ENCODE measurements at regions of chr4 and their contacts with region 1.

Region 1: DNA sequence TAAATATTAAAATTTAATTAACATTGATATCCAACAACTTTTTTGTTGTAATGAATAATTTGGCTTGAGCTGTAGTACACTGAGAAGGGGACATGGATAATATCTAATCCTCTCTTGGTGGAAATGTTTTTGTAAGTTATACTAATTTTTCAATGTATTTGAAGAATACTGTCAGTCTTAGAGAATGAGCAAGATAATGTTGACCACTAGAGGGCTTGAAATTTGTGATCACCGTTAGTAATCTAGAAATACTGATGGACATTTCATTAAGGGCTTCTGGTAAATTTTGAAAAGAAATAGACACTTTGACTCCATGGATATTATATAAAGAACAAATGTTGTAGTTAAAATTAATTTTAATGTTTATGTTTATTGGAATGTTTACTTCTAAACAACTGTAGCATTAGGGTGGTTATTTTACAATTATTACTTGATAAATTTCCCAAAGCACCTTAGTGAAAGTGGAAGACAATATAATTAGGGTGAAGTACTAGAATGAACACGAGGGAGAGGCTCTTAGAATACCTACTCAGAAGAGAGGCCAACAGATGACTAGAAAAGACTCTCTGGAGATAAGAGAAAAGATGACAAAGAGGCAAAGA is 20.0 kb upstream of the CAMK2D start:
- DNase-seq: no peak
- ATAC-seq: no peak
- H3K4me3 Mint-ChIP-seq: no peak overlapping the region
- H3K27ac Mint-ChIP-seq: no peak overlapping the region
- H3K4me1 Mint-ChIP-seq: no peaks in the 10 kb centered on the region
- H3K27me3 Mint-ChIP-seq: no peaks in the 10 kb centered on the region
- CTCF ChIP-seq: peak; percentile 76

Region 2: GRCh38 chr4:113243312-113243711 is 538.2 kb before region 1 on chr4:
- CTCF ChIA-PET with region 1: no interaction called
- POLR2A ChIA-PET with region 1: no interaction called
- intact Hi-C with region 1: no loop called
- DNase-seq: no peak
- ATAC-seq: no peak
- H3K4me3 Mint-ChIP-seq: no peak overlapping the region
- H3K27ac Mint-ChIP-seq: no peak overlapping the region
- H3K4me1 Mint-ChIP-seq: no peaks in the 10 kb centered on the region
- H3K27me3 Mint-ChIP-seq: peaks cover 2% of the 10 kb centered on the region
- CTCF ChIP-seq: no peak

Region 3: DNA sequence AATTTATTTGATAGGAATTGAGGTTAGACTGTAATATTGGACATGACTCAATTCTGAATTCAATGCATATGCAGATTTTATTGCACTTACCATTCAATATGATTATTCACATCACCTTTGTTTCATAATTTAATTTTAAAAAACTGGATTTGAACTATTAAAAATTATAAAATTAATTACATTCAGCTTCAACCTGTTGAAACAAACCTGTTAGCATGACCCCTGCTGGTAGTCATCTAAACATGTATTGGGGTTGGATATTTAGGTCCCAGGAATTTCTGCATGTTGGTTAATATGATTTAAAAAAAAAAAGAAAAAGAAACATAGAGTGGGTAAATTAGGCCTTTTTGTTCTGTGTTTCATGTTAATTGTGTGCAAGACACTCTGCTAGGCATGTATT is 112.0 kb after region 1 on chr4:
- CTCF ChIA-PET with region 1: no interaction called
- POLR2A ChIA-PET with region 1: no interaction called
- intact Hi-C with region 1: loop called (anchors 1 kb)
- DNase-seq: no peak
- ATAC-seq: no peak
- H3K4me3 Mint-ChIP-seq: no peak overlapping the region
- H3K27ac Mint-ChIP-seq: no peak overlapping the region
- H3K4me1 Mint-ChIP-seq: no peaks in the 10 kb centered on the region
- H3K27me3 Mint-ChIP-seq: peaks cover 1% of the 10 kb centered on the region
- CTCF ChIP-seq: no peak

Region 4: DNA sequence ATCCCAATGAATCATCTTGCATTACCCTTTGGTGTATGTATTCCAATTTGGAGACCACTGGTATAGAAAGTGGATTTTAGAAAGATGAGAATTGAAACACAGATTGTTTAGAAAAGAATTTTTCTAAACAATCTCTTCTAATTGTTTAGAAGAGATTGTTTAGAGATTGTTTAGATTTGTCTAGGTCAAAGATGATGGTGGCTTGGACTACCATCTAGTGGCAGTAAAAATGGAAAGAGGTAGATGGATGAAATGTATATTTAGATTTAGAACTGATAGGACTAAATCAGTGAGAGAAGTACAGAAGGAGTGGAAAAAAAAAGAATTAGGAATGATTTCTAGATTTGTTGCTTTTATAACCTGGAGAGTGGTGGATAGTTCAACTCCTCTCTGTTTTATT is 127.3 kb after region 1 on chr4:
- CTCF ChIA-PET with region 1: no interaction called
- POLR2A ChIA-PET with region 1: no interaction called
- intact Hi-C with region 1: loop called (anchors 1 kb)
- DNase-seq: no peak
- ATAC-seq: no peak
- H3K4me3 Mint-ChIP-seq: no peak overlapping the region
- H3K27ac Mint-ChIP-seq: no peak overlapping the region
- H3K4me1 Mint-ChIP-seq: no peaks in the 10 kb centered on the region
- H3K27me3 Mint-ChIP-seq: peaks cover 2% of the 10 kb centered on the region
- CTCF ChIP-seq: no peak

Region 5: DNA sequence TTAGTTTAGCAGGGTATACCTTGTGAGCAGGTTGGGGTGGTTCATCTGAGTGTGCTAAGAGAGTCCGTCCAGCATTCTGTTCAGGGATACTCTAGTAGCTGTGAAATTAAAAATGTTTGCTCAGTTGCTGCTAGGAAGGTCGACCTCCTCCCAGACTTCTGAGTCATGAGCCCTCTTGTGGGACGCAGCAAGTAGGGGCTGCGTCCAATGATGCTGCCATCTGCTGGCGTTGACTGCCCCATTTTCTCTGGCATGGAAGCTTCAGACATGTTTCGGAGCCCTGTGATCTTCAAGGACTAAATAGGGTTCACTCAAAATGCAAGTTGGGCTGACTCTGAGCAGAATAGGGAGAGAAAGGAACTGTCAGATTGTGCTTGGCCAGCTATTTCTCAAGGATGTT is 398.9 kb after region 1 on chr4:
- CTCF ChIA-PET with region 1: no interaction called
- POLR2A ChIA-PET with region 1: no interaction called
- intact Hi-C with region 1: loop called (anchors 10 kb)
- DNase-seq: no peak
- ATAC-seq: no peak
- H3K4me3 Mint-ChIP-seq: no peak overlapping the region
- H3K27ac Mint-ChIP-seq: no peak overlapping the region
- H3K4me1 Mint-ChIP-seq: no peaks in the 10 kb centered on the region
- H3K27me3 Mint-ChIP-seq: no peaks in the 10 kb centered on the region
- CTCF ChIP-seq: no peak

Measured in activated B cell treated with CpG ODN at 0.5 μM for 24 hours (primary cell).